ENCODE measurements at regions of chr6 and their contacts with region 1.

Region 1: DNA sequence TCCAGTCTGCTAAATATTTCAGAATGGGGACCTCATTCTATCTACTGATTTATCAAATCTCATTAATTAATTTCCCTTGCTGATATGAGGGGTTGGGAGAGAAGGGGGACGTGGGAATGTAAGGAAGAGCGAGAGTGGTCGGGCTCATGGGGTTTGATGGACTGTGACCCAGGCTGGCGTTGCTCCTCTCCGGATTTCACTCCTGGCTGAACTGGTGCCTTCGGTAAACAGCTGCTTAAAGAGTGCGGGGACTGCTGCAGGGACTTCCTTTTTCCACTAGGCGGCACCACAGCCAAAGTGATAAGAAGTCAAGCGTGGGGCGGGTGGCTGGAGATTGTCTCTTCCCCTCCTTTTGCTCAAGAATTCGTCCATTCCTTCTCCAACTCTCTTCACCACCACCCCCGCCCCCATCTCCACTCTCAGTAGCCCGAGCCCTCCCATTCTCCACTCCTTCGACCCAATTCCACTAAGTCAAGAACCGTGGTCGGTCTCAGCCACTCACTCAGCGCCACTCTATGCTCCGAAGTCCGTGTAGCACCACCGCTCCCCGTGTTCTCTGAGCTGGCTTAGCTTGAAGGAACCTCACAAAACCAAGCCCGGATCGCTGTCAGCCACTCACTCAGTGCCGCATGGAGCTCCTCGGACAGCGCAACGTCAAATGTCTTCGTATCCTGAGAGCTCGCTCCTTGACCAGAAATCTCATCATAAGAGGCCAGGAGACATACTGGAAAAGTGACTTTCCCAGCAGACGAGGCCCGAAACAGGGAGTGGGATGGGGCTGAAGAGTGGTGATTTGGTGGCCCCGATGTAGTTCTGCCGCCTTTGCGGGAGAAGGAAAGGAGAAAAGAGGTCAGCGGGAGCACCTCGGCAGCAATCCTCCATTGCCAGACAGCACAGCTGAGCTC is 9.7 kb downstream of the TRIM31 start:
- DNase-seq: peak; percentile 75
- ATAC-seq: peak; percentile 81
- H3K4me3 ChIP-seq: peak overlapping the region; percentile 38 to 78
- H3K27ac ChIP-seq: peak overlapping the region; percentile 37; the same call in 1 of the 2 replicates
- H3K4me1 ChIP-seq: peaks cover 16% of the 10 kb centered on the region
- H3K27me3 ChIP-seq: peaks cover 7% of the 10 kb centered on the region
- CTCF ChIP-seq: peak; percentile 95

Region 2: DNA sequence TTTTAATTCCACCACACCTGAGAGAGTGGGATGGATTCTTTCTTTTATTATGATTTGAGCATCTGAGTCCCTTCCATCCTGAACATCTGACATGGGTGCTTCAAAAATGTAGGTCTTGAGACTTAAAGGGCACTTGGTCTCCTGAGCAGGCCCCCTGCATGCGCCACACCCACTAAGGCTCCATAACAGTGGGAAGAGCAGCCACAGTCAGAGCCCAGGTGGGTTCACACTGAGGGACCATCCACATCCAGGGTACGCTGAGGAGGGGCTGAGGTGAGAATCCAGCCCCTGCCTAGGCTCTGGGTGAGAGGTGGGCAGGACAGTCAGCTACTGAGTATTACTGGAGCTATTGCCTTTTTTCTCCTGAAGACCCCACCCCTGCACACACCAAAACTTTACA is 118.2 kb before region 1 on chr6:
- CTCF ChIA-PET with region 1: interaction called, 13 read pairs
- POLR2A ChIA-PET with region 1: no interaction called
- in situ Hi-C with region 1: no loop called
- intact Hi-C with region 1: no loop called
- DNase-seq: no peak
- ATAC-seq: no peak
- H3K4me3 ChIP-seq: no peak overlapping the region
- H3K27ac ChIP-seq: no peak overlapping the region
- H3K4me1 ChIP-seq: no peaks in the 10 kb centered on the region
- H3K27me3 ChIP-seq: no peaks in the 10 kb centered on the region; the same call in 1 of the 2 replicates
- CTCF ChIP-seq: no peak

Region 3: GRCh38 chr6:30130887-30131862 is 28.0 kb after region 1 on chr6:
- CTCF ChIA-PET with region 1: interaction called, 68 read pairs
- POLR2A ChIA-PET with region 1: interaction called, 10 read pairs
- in situ Hi-C with region 1: no loop called
- intact Hi-C with region 1: loop called (anchors 1 kb)
- DNase-seq: peak; percentile 64
- ATAC-seq: peak; percentile 93
- H3K4me3 ChIP-seq: no peak overlapping the region
- H3K27ac ChIP-seq: peak overlapping the region; percentile 15; the same call in 1 of the 2 replicates
- H3K4me1 ChIP-seq: peaks cover 10% of the 10 kb centered on the region; the same call in 1 of the 2 replicates
- H3K27me3 ChIP-seq: peaks cover 19% of the 10 kb centered on the region
- CTCF ChIP-seq: peak; percentile 98

Region 4: GRCh38 chr6:30169658-30170614 is 66.7 kb after region 1 on chr6:
- CTCF ChIA-PET with region 1: interaction called, 4 read pairs
- POLR2A ChIA-PET with region 1: no interaction called
- in situ Hi-C with region 1: no loop called
- intact Hi-C with region 1: loop called (anchors 2 kb)
- DNase-seq: peak; percentile 54
- ATAC-seq: peak; percentile 95
- H3K4me3 ChIP-seq: no peak overlapping the region
- H3K27ac ChIP-seq: no peak overlapping the region
- H3K4me1 ChIP-seq: no peaks in the 10 kb centered on the region
- H3K27me3 ChIP-seq: peaks cover 20% of the 10 kb centered on the region
- CTCF ChIP-seq: peak; percentile 84